ENCODE measurements at regions of chr5 and their contacts with region 1.

Region 1: GRCh38 chr5:132272311-132273210 is 15.1 kb downstream of the PDLIM4 start:
- DNase-seq: peak; percentile 81
- H3K4me3 ChIP-seq: no peak overlapping the region
- H3K27ac ChIP-seq: no peak overlapping the region
- H3K4me1 ChIP-seq: peaks cover 18 to 32% of the 10 kb centered on the region in 2 experiments
- H3K27me3 ChIP-seq: no peaks in the 10 kb centered on the region
- CTCF ChIP-seq: peak; percentile 86
- EP300 ChIP-seq: no peak
- RAD21 ChIP-seq: peak; percentile 73

Region 2: DNA sequence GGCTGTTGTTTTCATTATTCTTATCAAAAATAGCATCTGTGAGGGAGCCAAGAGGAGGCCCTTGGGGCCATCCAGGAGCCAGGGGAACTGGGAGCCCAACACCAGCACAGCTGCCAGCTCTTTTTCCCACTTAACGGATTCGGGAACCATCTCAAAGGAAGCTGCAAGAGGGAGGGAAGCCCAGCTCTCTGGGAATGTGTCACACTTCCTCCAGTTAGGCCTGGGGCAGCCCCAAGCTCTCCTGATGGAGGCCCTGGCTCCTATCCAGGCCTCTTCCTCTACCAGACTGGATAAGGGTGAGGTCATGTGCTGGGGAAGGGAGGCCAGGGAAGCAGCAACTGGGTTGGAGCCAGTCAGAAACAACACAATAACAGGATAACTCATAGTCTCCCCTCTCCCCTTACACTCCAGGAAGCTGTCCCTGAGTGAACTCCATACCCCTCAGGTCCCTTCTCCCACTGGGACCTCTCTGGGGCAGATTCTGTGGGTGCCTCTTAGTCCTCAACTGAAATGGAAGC is 186.2 kb before region 1 on chr5:
- CTCF ChIA-PET with region 1: no interaction called
- POLR2A ChIA-PET with region 1: no interaction called
- DNase-seq: peak; percentile 59
- H3K4me3 ChIP-seq: no peak overlapping the region
- H3K27ac ChIP-seq: peak overlapping the region; percentile 22 to 74
- H3K4me1 ChIP-seq: peaks cover 17% of the 10 kb centered on the region in 2 experiments
- H3K27me3 ChIP-seq: no peaks in the 10 kb centered on the region
- CTCF ChIP-seq: no peak
- EP300 ChIP-seq: peak; percentile 17 to 88; a peak in 2 of 4 replicates
- RAD21 ChIP-seq: no peak

Region 3: GRCh38 chr5:132156413-132156812 is 116.1 kb before region 1 on chr5:
- CTCF ChIA-PET with region 1: no interaction called
- POLR2A ChIA-PET with region 1: no interaction called
- DNase-seq: no peak
- H3K4me3 ChIP-seq: no peak overlapping the region
- H3K27ac ChIP-seq: no peak overlapping the region
- H3K4me1 ChIP-seq: no peaks in the 10 kb centered on the region
- H3K27me3 ChIP-seq: no peaks in the 10 kb centered on the region; the same call in 1 of the 2 replicates
- CTCF ChIP-seq: no peak
- EP300 ChIP-seq: no peak
- RAD21 ChIP-seq: no peak

Region 4: DNA sequence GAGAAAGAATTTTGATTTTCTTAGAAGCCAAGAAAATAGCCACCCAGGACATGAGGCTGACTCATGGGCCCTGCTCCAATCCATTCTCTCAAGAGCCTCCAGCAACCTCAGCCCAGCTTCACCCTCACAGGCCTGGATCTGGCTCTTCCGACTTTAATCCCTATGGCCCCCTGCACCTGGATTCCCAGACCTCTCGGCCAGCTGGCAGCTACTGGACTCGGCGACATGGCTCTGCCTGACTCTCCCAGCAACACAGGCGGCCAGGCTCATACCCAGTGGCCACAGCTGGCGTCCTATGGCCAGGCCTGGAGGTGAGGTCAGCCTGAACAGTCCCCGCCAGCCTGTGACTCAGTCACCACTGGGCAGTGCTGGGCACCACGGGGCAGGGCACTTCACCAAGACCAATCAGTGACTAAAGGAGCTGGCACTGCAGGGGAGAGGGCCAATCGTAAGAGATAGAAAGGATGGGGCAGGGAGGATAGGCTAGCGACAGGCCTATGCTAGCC is 21.3 kb before region 1 on chr5:
- CTCF ChIA-PET with region 1: interaction called, 15 read pairs
- POLR2A ChIA-PET with region 1: no interaction called
- DNase-seq: no peak
- H3K4me3 ChIP-seq: no peak overlapping the region
- H3K27ac ChIP-seq: no peak overlapping the region
- H3K4me1 ChIP-seq: peaks cover 4 to 5% of the 10 kb centered on the region in 2 experiments; a peak in 2 of 4 replicates
- H3K27me3 ChIP-seq: no peaks in the 10 kb centered on the region
- CTCF ChIP-seq: no peak
- EP300 ChIP-seq: no peak
- RAD21 ChIP-seq: no peak

Region 5: DNA sequence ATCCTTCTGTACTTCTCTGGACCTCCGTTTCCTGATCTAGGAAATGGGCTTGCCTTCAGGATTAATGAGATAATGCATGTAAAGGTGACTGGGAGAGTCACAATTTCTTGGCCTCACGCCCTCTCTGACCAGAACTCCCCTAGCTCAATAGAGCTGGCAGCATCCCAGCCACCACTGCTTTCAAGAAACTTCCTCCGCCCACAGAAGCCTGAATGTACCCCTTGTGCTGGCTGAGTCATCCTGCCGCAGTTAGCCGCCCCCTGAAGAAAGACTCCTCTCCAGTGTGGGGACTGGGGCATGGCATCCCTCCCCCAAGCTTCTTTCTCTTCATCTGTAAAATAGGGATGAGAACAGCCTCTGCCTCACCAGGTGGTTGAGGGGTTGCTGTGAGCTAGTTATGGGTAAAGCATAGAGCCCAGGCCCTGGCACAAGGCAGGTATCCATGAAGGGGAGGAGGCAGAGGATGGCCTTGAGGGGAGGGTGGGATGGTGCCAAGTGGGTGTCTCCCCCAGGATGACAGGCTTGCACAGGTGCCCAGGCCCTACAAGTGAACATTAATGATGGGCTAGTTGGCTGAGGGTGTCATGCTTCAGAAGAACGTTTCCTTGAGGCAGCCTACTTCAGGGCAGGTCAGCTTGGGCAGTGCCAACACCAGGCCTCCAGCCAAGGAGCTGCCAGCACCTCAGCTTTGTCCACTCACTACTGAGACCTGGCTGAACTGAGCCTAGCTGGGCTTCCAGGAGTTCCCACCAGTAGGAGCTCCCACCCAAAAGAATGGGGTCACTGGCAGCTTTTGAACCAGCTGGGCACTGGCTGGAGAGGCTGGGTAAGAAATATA is 11.6 kb before region 1 on chr5:
- CTCF ChIA-PET with region 1: interaction called, 23 read pairs
- POLR2A ChIA-PET with region 1: interaction called, 4 read pairs
- DNase-seq: no peak
- H3K4me3 ChIP-seq: no peak overlapping the region
- H3K27ac ChIP-seq: peak overlapping the region; percentile 91 to 98
- H3K4me1 ChIP-seq: peaks cover 45 to 79% of the 10 kb centered on the region in 2 experiments
- H3K27me3 ChIP-seq: no peaks in the 10 kb centered on the region
- CTCF ChIP-seq: no peak
- EP300 ChIP-seq: peak in 1 of 2 experiments; percentile 66; a peak in 2 of 4 replicates
- RAD21 ChIP-seq: no peak

Measured in SK-N-SH (cell line).